Right ventricle myocardium superior (tissue), 1 donor: ENCODE measurements at regions of chr1 and their contacts with region 1.

Region 1: DNA sequence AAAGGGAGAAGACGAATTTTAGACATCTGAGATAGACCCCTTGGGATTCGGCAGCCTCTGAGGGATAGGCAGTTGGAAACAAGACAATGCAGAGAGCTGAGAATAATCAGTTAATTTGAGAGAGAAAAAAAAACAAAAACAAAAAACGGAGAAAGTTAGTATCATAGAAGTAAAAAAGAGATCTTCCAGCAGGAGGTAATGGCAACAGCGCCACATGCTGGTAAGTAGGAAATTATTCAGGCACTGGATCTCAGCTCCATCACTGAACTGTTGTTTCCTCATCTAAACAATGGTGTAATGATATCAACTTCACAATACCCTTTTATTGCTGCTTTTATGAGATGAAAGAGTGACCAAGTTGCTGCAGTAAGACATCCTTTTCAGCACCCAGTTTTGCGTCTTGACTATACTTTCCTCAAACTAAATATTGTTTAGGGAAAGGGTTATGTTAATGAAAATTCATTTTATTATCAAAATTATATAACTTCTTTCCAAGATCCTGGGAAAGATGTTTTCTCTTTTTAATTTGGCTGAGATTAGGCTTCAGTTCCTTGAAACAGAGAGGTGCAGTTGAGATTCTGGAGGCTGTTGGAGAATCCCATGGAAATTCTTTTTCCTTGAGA is 91.4 kb upstream of the KCNA3 start:
- DNase-seq: no peak
- ATAC-seq: peak; percentile 86

Region 2: DNA sequence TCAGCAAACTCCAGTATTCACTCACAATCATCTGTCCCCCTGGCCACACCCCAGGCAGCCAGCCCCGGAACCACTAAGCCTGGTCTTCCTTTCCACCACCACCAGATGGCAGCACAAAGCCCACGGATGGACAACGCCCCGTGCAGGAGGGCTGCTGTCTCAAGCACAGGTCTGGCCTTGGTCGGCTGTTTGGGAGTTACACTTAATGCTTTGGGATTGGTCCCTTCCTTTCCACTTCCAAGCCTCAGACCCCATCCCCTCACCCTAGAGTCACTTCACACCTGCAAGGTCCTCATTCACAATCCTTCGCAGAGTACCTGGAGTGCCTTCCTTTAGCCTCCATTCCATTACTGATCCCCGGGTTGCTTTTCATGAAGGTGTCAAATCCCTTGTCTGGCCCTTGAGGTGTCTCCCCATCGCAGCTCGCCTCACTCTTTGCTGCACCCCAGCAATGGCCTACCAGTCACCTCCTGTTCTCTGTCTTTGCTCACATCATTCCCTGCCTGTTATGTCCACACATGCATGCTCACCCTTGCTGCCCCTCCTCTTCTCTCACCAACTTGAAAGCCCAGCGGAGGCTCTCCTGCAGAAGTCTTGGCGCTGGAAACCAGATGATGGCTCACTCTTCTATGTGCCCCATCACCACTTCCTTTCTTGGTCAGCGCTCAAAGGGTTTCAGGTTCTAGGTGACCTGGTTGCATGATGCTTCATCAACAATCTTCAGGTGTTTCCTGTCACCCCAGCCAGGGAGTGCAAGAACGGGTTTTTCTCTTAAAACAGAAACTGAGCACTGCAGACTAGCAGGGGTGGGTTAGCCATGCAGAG is 135.1 kb before region 1 on chr1:
- intact Hi-C with region 1: loop called (anchors 2 kb)
- DNase-seq: peak; percentile 82
- ATAC-seq: peak; percentile 59